ENCODE measurements at regions of chr10 and their contacts with region 1.

Region 1: DNA sequence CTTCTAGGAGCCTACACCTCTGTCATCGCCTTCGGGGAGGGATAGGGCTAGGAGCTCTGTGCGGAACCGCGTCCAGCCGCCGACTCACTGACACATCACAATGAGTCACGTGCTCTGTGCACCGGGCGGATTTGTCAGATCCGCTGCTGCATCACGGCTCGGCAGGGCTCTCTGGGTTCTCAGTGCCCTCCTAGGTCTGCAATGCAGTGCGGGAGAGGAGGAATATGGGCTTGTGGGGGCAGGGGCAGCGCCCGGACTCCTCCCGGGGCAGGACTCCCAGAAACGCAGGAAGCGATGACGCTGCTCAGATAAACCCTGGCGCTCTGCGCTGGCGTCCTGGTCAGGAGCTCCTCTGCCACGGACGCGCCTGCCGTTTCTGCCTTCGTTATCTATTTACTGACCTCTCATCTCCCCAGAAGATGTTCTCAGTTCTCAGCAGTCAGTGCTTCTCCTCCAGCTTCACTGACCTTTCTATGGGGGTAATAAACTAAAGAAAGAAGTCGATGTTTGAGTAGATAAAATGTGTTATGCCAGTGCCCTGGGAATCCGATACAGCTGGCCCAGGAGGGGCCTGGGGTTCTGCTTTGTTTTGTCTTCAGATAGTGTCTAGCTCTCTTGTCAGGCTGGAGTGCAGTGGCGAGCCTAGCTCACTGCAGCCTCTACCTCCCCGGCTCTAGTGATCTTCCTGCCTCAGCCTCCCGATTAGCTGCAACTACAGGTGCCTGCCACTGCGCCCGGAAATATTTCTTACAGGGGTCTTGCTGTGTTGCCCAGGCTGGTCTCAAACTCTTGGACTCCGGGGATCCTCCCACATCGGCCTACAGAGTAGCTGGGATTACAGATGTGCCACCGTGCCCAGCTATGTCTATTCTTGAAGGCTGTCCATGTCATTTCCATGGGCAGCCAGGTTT is 22.8 kb upstream of the ITGB1 start:
- DNase-seq: peak; percentile 92 to 94
- H3K4me3 ChIP-seq: peak overlapping the region; percentile 60
- H3K27ac ChIP-seq: peak overlapping the region; percentile 98
- H3K4me1 ChIP-seq: peaks cover 58% of the 10 kb centered on the region
- H3K27me3 ChIP-seq: no peaks in the 10 kb centered on the region
- CTCF ChIP-seq: no peak

Region 2: GRCh38 chr10:31961277-31962074 is 1019.3 kb before region 1 on chr10:
- CTCF ChIA-PET with region 1: no interaction called
- POLR2A ChIA-PET with region 1: no interaction called
- intact Hi-C with region 1: no loop called
- DNase-seq: peak; percentile 74 to 95
- H3K4me3 ChIP-seq: peak overlapping the region; percentile 19; the same call in 1 of the 2 replicates
- H3K27ac ChIP-seq: peak overlapping the region; percentile 88
- H3K4me1 ChIP-seq: peaks cover 67% of the 10 kb centered on the region
- H3K27me3 ChIP-seq: no peaks in the 10 kb centered on the region
- CTCF ChIP-seq: no peak

Region 3: GRCh38 chr10:32906595-32906994 is 74.2 kb before region 1 on chr10:
- CTCF ChIA-PET with region 1: no interaction called
- POLR2A ChIA-PET with region 1: no interaction called
- intact Hi-C with region 1: no loop called
- DNase-seq: no peak
- H3K4me3 ChIP-seq: no peak overlapping the region
- H3K27ac ChIP-seq: 0 out of 2 replicates have a peak overlapping the region, but pooled peaks have one; percentile 29
- H3K4me1 ChIP-seq: no peaks in the 10 kb centered on the region
- H3K27me3 ChIP-seq: no peaks in the 10 kb centered on the region
- CTCF ChIP-seq: no peak

Region 4: GRCh38 chr10:32923849-32924248 is 57.0 kb before region 1 on chr10:
- CTCF ChIA-PET with region 1: no interaction called
- POLR2A ChIA-PET with region 1: no interaction called
- intact Hi-C with region 1: no loop called
- DNase-seq: no peak
- H3K4me3 ChIP-seq: no peak overlapping the region
- H3K27ac ChIP-seq: no peak overlapping the region
- H3K4me1 ChIP-seq: no peaks in the 10 kb centered on the region
- H3K27me3 ChIP-seq: no peaks in the 10 kb centered on the region
- CTCF ChIP-seq: no peak

Region 5: DNA sequence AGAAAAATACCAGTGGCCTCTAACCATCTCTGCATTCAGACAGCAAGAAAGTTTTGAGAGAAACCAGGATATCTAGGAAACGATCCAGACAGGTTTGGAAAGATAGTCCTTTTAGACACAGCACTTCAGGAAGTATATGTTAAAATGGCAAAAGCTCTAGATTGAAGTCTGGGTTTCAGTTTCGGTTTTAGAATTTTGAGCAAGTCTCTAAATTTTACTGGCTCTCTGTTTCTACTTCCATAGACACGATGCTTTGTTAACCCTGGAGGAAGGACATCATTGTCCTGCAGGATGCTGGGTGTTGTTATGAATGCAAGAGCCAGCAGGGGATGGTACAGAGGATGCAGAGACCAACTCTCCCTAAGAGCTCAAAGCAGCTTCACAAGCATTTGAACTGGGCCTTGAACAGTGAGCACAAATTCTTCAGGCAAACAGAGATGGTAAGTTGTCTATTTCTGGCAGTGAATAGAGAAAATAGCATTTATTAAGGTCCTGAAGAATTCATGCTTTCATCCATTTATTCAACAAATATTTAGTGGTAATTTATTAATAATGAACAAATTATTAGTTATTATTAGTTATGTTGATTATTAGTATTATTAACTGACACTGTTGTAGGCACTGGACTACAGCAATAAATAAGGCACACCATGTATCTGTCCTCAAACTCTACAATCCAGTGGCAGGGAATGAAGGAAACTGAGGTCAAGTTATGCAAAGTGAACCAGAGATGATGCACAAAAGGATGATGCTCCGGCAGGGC is 506.4 kb after region 1 on chr10:
- CTCF ChIA-PET with region 1: no interaction called
- POLR2A ChIA-PET with region 1: interaction called, 10 read pairs
- intact Hi-C with region 1: no loop called
- DNase-seq: no peak
- H3K4me3 ChIP-seq: no peak overlapping the region
- H3K27ac ChIP-seq: no peak overlapping the region
- H3K4me1 ChIP-seq: no peaks in the 10 kb centered on the region
- H3K27me3 ChIP-seq: no peaks in the 10 kb centered on the region
- CTCF ChIP-seq: no peak

Region 6: GRCh38 chr10:34743814-34744213 is 1763.0 kb after region 1 on chr10:
- CTCF ChIA-PET with region 1: no interaction called
- POLR2A ChIA-PET with region 1: interaction called, 14 read pairs
- intact Hi-C with region 1: no loop called
- DNase-seq: no peak
- H3K4me3 ChIP-seq: no peak overlapping the region
- H3K27ac ChIP-seq: no peak overlapping the region
- H3K4me1 ChIP-seq: no peaks in the 10 kb centered on the region
- H3K27me3 ChIP-seq: no peaks in the 10 kb centered on the region
- CTCF ChIP-seq: no peak